Left colon (tissue), 2 donors: ENCODE measurements at regions of chr19 and their contacts with region 1.

Region 1: GRCh38 chr19:35013031-35013819 is 13.1 kb downstream of the GRAMD1A start:
- DNase-seq: peak; percentile 67 to 83
- ATAC-seq: peak; percentile 80

Region 2: DNA sequence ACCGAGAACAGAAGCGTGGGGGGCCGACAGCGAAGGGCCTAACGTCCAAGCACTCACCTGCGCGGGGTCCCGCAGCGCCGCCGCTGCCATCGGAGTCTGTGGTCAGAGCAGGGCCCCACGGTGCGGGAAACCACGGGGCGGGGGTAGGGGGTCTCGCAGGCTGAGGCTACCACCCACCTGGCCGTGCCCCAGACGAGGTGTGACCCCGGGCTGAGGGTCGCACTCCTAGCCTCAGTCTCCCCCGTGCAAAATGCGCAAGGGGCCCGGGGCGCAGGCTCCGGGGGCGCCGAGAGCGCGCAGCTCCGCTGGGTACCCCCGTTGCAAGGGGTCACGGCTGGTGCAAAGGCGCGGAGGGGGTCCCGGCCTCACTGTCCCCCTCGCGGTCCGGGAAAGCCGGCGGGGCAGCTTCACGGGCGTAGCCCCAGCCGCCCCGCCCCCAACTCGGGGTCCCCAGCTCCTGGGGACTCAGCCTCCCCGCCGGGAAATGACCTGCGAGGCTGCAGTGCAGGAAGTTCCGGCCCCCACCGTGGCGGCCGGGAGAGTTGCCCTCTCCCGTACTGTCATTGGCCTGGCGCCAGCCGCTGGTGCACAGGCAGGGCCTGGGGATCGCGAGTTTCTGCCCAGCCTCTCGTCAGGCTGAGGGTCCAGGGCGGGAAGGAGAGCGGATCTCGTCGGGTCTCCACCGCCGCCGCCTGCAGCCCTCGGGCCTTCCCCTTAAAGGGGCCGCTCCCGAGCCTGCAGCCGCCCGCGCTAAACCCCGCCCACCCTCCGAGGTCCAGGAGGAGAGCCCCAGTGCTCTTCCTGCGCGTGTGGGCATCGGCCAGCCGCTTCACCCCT is 49.4 kb before region 1 on chr19 and contains the start of gene ZNF792:
- intact Hi-C with region 1: no loop called
- DNase-seq: peak; percentile 69 to 83
- ATAC-seq: peak; percentile 84
- total RNA-seq, gene ZNF792: 5.8 to 6.4 TPM

Region 3: DNA sequence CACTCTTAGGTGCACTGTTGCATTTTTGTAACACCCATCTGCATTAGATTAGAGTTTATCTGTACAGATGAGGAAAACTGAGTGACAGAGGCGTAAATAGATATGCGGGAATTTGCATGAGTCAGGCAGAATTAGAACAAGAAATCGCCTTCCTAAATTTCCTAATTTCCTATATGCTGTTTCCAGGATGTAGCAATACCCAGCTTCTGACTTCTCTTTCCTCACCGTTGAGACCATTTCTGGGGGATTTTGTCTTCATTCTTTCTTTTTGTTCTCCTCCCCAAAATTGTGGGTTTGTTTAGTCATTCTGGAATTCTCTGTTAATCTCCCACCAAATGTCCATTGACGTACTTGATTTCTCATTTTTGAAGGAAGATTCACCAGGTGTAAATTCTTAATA is 38.6 kb before region 1 on chr19:
- intact Hi-C with region 1: loop called (anchors 2 to 5 kb)
- DNase-seq: no peak
- ATAC-seq: no peak

Region 4: DNA sequence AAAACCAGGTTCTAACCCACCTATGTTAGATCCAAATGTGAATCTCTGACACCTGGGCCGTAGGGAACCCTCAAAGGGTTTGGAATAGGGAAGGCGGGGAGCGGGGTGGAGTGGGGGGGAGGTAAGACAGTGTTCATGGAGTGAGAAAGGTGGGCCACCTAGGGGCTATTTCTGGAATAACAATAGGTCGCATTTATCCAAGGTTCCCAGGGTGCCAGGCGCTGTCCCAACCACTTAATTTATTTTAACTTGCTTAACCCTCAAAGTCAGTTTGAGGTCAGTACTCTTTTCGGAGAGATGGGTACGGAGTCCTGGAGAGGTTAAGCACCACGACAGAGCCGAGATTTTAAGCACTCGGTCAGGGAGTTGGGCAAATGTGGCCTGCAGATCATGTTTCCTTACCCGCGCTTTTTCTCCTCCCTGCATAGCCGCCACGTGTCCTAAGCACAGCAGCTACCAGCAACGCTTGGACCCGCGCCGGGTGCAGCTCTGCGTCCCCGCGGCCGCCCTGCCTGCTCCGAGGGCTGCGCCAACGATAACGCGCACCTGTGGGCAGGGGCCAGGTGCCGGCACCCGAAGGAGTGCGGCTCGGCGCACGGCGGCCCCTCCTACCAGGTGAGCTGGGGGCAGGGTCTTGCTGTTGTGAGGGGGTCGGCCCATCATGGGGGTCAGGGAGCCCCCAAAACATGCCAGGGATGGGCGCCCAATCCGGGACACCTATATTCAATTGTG is 77.4 kb after region 1 on chr19:
- intact Hi-C with region 1: no loop called
- DNase-seq: peak in 1 of 2 donors; percentile 59
- ATAC-seq: peak; percentile 84